AG04449 (cell line): ENCODE measurements at regions of chr9 and their contacts with region 1.

Region 1: GRCh38 chr9:92140074-92140753 is 25.0 kb upstream of the SPTLC1 start:
- DNase-seq: no peak
- H3K4me3 ChIP-seq: peak overlapping the region; percentile 12; the same call in 1 of the 2 replicates
- CTCF ChIP-seq: peak; percentile 99

Region 2: DNA sequence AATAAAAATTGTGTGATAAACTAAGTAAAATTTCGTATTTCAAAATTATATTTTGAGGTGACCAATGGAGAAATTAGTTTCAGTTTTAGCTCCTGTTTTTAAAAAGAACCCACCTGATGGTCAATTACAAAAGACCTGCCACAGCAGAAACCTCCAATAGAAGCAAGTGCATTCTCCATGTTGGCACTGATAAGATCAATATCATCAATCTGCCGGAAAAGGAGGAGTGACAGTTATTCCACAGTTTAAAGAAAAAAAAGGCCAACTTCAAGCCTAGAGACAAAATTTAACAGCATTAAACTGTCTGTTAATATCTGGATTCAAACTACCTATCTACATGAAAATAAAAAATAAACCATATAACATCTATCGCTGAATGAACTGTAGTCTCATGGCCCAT is 92.7 kb before region 1 on chr9:
- CTCF ChIA-PET with region 1: no interaction called
- POLR2A ChIA-PET with region 1: no interaction called
- DNase-seq: no peak
- H3K4me3 ChIP-seq: no peak overlapping the region
- CTCF ChIP-seq: no peak

Region 3: DNA sequence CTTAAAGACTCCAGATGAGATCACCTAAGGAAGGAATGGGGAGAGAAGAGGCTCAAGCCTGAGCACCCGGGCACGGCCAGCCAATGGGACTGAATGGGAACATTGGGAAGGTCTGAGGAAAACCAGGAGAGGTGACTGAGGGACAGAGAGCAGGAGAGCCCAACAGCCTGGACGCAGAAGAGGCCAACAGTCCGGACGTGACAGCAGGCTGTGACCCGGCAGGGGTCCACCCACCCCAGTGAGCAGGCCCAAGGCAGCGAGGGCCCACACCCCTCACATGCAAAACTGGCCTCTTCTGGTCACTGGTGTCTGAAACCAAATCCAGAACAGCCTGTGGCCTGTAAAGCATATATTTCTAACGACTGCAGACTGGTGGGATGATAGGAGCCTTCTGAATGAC is 17.4 kb before region 1 on chr9:
- CTCF ChIA-PET with region 1: interaction called, 49 read pairs
- POLR2A ChIA-PET with region 1: no interaction called
- DNase-seq: no peak
- H3K4me3 ChIP-seq: no peak overlapping the region
- CTCF ChIP-seq: no peak

Region 4: DNA sequence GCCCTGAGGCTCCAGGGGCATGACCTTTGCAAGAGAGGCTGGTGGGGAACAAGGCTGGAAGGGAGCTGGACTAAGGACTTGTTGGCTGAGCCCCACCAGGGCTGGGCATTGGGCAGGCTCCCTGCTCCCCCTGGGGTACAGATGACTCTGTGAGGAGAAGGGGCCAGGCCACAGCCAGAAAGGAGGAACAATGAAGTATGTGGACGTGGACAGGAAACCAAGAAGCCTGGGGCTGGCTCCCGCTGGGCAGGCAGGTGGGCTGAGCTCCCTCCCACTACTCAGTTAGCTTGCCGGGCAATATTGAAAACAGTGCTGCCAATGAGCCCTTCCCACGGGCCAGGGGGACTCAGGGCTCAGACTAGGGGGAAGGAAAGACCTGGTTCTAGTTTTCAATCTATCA is 41.1 kb after region 1 on chr9:
- CTCF ChIA-PET with region 1: interaction called, 21 read pairs
- POLR2A ChIA-PET with region 1: no interaction called
- DNase-seq: no peak
- H3K4me3 ChIP-seq: no peak overlapping the region
- CTCF ChIP-seq: no peak

Region 5: DNA sequence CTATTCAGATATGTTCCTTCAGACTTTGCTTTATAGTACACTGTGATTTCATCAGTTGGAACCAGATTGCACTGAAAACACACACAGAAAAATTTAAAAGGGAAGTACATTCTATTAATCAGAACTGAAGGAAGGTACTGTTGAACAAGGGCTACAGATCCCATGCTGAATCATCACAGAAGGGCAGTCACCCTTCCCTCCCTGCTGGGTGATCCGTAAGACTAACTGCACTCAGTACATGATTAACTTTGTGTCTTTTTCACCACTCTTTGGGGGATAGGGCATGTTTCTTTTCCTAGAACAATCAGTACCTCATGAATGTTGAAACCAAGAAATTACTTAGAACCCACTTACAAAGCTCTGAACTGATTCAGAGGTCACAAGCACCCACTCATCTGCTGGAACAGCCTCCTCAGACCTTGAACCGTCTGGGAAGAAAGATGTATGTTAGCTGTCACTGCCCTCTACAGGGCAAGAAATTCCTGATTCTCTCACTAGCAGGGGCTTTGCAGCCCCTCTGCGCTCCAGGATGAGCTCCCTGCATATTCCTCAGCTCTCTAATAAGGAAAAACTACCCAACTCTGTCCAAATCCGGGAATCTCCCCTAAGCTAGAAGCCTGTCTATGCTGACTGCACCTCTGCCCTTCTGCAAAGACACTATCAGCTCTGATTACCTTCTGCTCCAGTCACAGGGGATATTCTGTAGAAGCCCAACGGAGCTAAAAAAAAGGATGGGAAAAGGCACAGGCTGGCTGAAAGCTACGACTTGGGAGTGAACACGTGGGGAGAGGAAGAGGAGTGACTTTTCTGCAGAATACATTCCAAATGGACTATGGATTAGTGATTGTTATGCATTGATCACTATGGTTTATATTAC is 102.3 kb after region 1 on chr9:
- CTCF ChIA-PET with region 1: interaction called, 591 read pairs
- POLR2A ChIA-PET with region 1: interaction called, 11 read pairs
- DNase-seq: peak; percentile 40
- H3K4me3 ChIP-seq: no peak overlapping the region
- CTCF ChIP-seq: peak; percentile 35

Region 6: GRCh38 chr9:92293452-92294296 is 153.5 kb after region 1 on chr9 and contains the start of gene IARS1:
- CTCF ChIA-PET with region 1: interaction called, 64 read pairs
- POLR2A ChIA-PET with region 1: no interaction called
- DNase-seq: peak; percentile 91
- H3K4me3 ChIP-seq: peak within 1 kb of the TSS; percentile 72
- CTCF ChIP-seq: peak; percentile 59

Region 7: DNA sequence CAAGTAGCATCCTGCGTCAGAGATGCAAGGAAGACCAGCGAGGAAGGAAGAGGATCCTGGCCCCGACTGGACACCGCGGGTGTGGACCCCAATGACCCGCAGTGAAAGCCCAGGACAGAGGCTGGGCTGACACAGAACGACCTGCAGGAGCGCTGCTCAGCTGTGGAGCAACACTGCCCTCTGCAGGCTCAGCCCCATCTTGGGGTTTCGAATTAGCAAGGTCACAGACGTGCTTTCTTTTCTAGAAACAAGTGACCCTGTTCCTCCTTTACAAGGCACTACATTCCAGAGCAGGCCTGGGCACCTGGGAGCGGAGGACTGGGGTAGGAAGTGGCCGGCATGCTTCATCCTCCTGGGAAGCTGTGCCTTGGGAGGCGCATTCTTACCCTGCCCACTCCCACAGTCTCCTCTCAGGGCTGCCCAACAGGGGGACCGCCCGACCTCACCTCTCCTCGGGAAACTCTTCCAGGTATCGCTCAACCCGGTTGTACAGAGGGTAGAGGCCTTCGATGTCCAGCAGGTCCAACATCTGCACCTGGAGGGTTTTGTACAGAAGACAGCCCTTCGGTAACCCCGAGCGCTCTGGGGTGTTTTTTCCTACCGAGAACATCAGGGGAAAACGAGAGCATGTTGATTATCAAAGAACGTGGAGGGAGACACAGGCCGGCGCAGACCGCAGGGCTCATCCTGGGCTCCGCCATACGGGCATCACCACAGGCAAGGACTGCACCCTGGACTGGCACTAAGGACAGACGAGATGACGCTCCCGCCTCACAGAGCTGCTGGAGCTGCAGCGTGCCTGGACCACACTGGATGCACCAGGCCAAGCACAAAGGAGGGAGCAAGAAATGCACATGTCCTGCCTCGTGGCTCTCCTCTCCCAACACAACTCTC is 494.7 kb after region 1 on chr9:
- CTCF ChIA-PET with region 1: interaction called, 11 read pairs
- POLR2A ChIA-PET with region 1: no interaction called
- DNase-seq: no peak
- H3K4me3 ChIP-seq: no peak overlapping the region
- CTCF ChIP-seq: peak; percentile 94